Activated CD8-positive, alpha-beta memory T cell treated with anti-CD3 and anti-CD28 coated beads, Interleukin-2, amount 10 ng/mL, durations not matched to agents 7 days and 5 days (primary cell): ENCODE measurements at regions of chr6 and their contacts with region 1.

Region 1: GRCh38 chr6:3119040-3119723 is 671 bp downstream of the BPHL start:
- DNase-seq: no peak
- ATAC-seq: peak; percentile 23
- H3K4me3 Mint-ChIP-seq: peak overlapping the region; percentile 76
- H3K27ac Mint-ChIP-seq: no peak overlapping the region
- H3K4me1 Mint-ChIP-seq: peaks cover 20% of the 10 kb centered on the region
- H3K27me3 Mint-ChIP-seq: no peaks in the 10 kb centered on the region

Region 2: GRCh38 chr6:3108746-3109414 is 10.3 kb before region 1 on chr6:
- CTCF ChIA-PET with region 1: interaction called, 11 read pairs
- DNase-seq: no peak
- ATAC-seq: no peak
- H3K4me3 Mint-ChIP-seq: no peak overlapping the region
- H3K27ac Mint-ChIP-seq: peak overlapping the region; percentile 2
- H3K4me1 Mint-ChIP-seq: peaks cover 5% of the 10 kb centered on the region
- H3K27me3 Mint-ChIP-seq: no peaks in the 10 kb centered on the region